ENCODE measurements at regions of chr6 and their contacts with region 1.

Region 1: DNA sequence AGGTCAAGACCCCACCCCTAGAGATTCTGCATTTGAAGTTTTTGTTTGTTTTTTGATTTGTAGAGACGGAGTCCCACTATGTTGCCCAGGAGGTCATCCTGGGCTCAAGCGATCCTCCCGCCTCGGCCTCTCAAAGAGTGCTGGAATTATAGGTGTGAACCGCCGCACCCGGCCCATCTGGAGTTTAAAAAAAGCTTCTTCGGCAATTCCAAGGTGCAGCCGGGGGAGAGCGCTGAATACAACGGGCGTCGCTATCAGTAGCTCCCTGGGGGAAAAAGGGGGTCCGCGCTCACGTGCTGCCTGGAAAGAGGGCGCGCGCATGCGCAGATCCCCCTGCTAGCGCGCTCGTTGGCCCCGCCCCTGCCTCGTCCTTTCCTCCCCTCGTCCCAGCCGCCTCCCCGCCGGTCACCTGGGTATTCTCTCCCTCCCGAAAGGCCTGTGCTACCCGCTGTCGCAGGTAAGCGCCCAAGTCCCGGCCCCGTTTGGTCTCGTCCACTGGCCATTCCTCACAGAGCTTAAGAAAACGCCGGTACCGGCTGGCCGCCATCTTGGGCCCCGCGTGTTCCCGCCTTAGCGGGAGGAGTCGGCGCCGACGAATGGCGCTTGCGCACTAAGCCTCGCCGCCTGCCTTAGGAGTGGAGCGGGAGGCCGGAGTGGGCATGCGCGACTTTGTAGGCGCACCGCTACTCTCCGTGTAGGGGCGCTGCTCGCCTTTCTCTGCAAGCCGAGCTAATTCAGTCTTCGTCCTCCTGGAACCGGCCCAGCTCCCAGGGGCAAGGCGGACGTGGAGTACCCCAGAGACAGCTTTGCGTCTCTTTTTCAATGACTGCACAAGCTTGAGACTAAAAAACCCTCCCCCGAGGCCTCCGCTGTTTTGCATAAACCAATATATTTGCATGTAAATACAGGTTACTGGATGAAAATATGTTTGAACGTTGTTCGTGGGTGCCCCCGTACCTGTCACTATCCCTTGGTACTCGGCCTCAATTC is at the start of gene UQCC2:
- DNase-seq: peak; percentile 97
- H3K4me3 ChIP-seq: peak within 1 kb of the TSS; percentile 86 to 87
- H3K27ac ChIP-seq: peak within 1 kb of the TSS; percentile 79 to 97
- H3K4me1 ChIP-seq: peaks cover 8 to 17% of the 10 kb centered on the region in 2 experiments; a peak in 3 of 4 replicates
- H3K27me3 ChIP-seq: no peaks in the 10 kb centered on the region
- CTCF ChIP-seq: peak; percentile 68
- EP300 ChIP-seq: no peak
- RAD21 ChIP-seq: peak; percentile 82
- polyA plus RNA-seq, gene UQCC2: 49.8 and 59.0 TPM in 2 replicates

Region 2: GRCh38 chr6:32968093-32968866 is 743.2 kb before region 1 on chr6 and contains the start of gene BRD2:
- CTCF ChIA-PET with region 1: no interaction called
- POLR2A ChIA-PET with region 1: no interaction called
- DNase-seq: peak; percentile 93
- H3K4me3 ChIP-seq: peak within 1 kb of the TSS; percentile 80 to 83
- H3K27ac ChIP-seq: peak within 1 kb of the TSS; percentile 97 to 99
- H3K4me1 ChIP-seq: peaks cover 6% of the 10 kb centered on the region in 2 experiments; a peak in 2 of 4 replicates
- H3K27me3 ChIP-seq: no peaks in the 10 kb centered on the region
- CTCF ChIP-seq: no peak
- EP300 ChIP-seq: peak; percentile 17 to 26; a peak in 1 of 4 replicates
- RAD21 ChIP-seq: no peak
- polyA plus RNA-seq, gene BRD2: 104 and 116 TPM in 2 replicates

Region 3: DNA sequence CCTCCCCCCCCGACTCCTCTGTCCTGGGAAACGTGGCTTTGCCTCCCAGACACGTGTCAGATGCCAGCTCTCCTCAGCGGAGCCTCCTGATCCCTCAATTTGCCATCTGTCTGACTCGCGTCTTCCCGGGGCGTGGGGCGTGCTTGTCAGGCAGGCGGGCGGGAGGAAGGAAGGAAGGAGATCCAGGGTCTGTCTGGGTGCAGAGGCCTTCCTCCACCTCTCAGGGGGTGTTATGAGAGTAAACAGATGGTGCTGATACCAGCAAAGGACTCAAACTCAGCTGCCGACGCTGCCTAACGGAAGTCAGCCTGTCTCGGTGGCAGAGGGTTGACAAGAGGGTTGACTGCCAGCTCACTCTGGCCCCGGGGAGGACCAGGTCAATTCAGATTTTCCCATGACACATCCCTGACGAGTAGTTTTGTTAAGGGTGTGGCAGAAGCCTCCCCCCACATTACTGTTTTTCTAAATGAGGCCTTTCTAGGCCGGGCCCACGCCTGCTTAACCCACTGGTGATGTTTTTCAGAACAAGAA is 17.0 kb before region 1 on chr6:
- CTCF ChIA-PET with region 1: interaction called, 12 read pairs
- POLR2A ChIA-PET with region 1: interaction called, 4 read pairs
- DNase-seq: peak; percentile 47
- H3K4me3 ChIP-seq: no peak overlapping the region
- H3K27ac ChIP-seq: peak overlapping the region; percentile 47 to 59; a peak in 3 of 4 replicates
- H3K4me1 ChIP-seq: peaks cover 34 to 47% of the 10 kb centered on the region in 2 experiments; a peak in 3 of 4 replicates
- H3K27me3 ChIP-seq: no peaks in the 10 kb centered on the region
- CTCF ChIP-seq: no peak
- EP300 ChIP-seq: no peak
- RAD21 ChIP-seq: no peak

Region 4: GRCh38 chr6:33732826-33733708 is 21.6 kb after region 1 on chr6:
- CTCF ChIA-PET with region 1: interaction called, 20 read pairs
- POLR2A ChIA-PET with region 1: interaction called, 4 read pairs
- DNase-seq: no peak
- H3K4me3 ChIP-seq: no peak overlapping the region
- H3K27ac ChIP-seq: no peak overlapping the region
- H3K4me1 ChIP-seq: peaks cover 0 to 13% of the 10 kb centered on the region in 2 experiments; a peak in 1 of 4 replicates
- H3K27me3 ChIP-seq: 0 out of 2 replicates have a peak, but pooled peaks cover 6% of the 10 kb centered on the region
- CTCF ChIP-seq: no peak
- EP300 ChIP-seq: no peak
- RAD21 ChIP-seq: no peak

Region 5: DNA sequence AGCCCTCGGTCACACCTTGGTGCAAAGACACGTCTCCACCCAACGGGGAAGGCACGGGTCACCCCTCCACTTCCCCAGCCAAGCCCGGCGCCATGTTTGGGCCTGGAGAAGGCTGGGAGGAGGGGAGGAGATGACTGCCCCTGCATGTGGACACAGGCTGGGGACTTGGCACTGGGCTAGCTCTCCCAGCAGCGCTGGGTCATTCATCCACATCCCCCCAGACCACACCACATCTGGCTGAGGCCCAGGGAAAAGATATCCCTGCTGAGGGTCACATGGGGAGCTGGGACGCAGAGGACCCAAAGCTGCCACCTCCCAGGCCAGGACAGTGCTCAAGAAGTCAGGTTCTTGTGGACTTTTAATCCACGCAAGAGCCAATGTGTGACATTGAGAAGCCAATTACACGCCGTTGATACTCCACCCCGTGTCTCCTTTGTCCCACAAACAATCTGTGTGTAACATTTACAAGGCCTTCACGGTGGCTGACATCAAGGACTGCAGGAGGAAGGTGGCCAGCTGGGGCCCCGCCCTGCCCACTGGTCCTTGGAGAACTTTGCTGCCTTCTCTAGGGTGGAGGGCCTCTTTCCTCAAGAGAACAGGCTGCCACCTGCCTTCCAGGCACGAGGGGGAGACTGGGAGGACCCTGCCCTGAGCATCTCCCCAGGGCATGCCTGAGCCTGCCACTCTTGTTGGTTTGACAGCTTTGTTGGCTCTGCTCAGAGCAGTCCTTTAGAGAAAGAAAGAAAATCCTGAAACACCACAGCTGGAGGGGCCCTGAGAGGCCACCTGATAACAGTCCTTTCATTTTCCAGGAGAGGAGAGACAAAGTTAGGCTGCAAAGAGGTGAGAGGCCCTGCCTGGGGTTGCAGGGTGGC is 40.6 kb after region 1 on chr6:
- CTCF ChIA-PET with region 1: interaction called, 17 read pairs
- POLR2A ChIA-PET with region 1: interaction called, 3 read pairs
- DNase-seq: no peak
- H3K4me3 ChIP-seq: no peak overlapping the region
- H3K27ac ChIP-seq: no peak overlapping the region
- H3K4me1 ChIP-seq: peaks cover 0 to 21% of the 10 kb centered on the region in 2 experiments; a peak in 1 of 4 replicates
- H3K27me3 ChIP-seq: no peaks in the 10 kb centered on the region
- CTCF ChIP-seq: no peak
- EP300 ChIP-seq: no peak
- RAD21 ChIP-seq: no peak

Region 6: DNA sequence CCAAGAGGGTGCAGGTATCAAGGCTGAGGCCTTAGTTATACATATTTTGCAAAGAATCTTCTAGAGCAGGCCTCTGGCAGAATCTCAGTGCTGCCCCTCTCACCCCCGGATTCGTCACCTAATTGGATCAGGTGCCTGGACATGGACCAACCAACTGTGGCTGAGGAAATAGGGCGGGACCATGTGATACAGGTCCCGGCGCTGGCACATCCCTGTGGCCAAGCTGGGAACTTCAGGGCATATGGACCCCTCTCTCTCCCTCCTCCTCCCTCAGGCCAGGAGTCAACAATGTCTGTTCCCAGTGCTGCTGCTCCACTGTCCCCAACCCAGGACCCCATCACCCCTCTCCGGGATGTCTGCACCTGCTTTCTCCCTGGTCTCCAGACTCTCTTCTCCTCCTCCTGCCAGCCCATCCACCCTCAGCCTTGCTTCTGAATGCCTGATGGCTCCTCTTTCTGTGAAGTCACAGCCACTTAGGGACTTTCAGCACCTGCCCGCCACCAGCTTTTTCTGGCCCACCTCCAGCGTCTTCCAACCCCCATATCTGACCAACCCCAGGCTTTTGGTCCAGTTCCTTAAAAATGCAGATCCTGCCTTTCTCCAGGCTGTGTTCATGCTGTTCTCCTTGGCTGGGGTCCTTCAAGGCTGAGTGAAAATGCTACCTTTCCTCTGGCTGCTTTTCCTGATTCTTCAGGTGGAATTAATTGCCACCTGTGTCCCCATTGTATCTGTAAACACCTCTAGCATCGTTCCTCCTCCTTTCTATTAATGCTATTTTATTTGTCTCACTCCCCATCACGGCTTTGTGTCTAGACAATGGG is 111.3 kb after region 1 on chr6:
- CTCF ChIA-PET with region 1: no interaction called
- POLR2A ChIA-PET with region 1: no interaction called
- DNase-seq: peak; percentile 81
- H3K4me3 ChIP-seq: no peak overlapping the region
- H3K27ac ChIP-seq: no peak overlapping the region
- H3K4me1 ChIP-seq: peaks cover 0 to 5% of the 10 kb centered on the region in 2 experiments; a peak in 1 of 4 replicates
- H3K27me3 ChIP-seq: peaks cover 6% of the 10 kb centered on the region; the same call in 1 of the 2 replicates
- CTCF ChIP-seq: peak; percentile 46
- EP300 ChIP-seq: no peak
- RAD21 ChIP-seq: 0 out of 2 replicates have a peak, but pooled peaks have one; percentile 30

Region 7: GRCh38 chr6:34027445-34027936 is 316.1 kb after region 1 on chr6:
- CTCF ChIA-PET with region 1: interaction called, 17 read pairs
- POLR2A ChIA-PET with region 1: no interaction called
- DNase-seq: peak; percentile 88
- H3K4me3 ChIP-seq: no peak overlapping the region
- H3K27ac ChIP-seq: no peak overlapping the region
- H3K4me1 ChIP-seq: peaks cover 0 to 21% of the 10 kb centered on the region in 2 experiments; a peak in 1 of 4 replicates
- H3K27me3 ChIP-seq: no peaks in the 10 kb centered on the region; the same call in 1 of the 2 replicates
- CTCF ChIP-seq: peak; percentile 77
- EP300 ChIP-seq: no peak
- RAD21 ChIP-seq: peak; percentile 70

Measured in SK-N-SH (cell line).